Activated T-helper 1 cell treated with anti-CD3 and anti-CD28 coated beads, Interleukin-12 subunit alpha, Interleukin-12 subunit beta, Interleukin-2, Interleukin-4 antibody, amounts not matched to agents 30 ng/mL and 10 ng/mL and 1 ng/mL, durations not matched to agents 14 hours and 24 hours and 36 hours (primary cell): ENCODE measurements at regions of chr15 and their contacts with region 1.

Region 1: GRCh38 chr15:59917504-59918157 is 86.5 kb upstream of the FOXB1 start:
- DNase-seq: peak; percentile 67
- H3K4me3 Mint-ChIP-seq: no peak overlapping the region
- H3K27ac Mint-ChIP-seq: peak overlapping the region; percentile 1
- H3K4me1 Mint-ChIP-seq: peaks cover 27% of the 10 kb centered on the region
- H3K27me3 Mint-ChIP-seq: peaks cover 32% of the 10 kb centered on the region

Region 2: GRCh38 chr15:59688841-59689625 is 228.6 kb before region 1 on chr15 and contains the start of gene BNIP2:
- intact Hi-C with region 1: loop called (anchors 1 kb)
- DNase-seq: peak; percentile 99
- H3K4me3 Mint-ChIP-seq: peak within 1 kb of the TSS; percentile 90
- H3K27ac Mint-ChIP-seq: peak within 1 kb of the TSS; percentile 91
- H3K4me1 Mint-ChIP-seq: peaks cover 41% of the 10 kb centered on the region
- H3K27me3 Mint-ChIP-seq: no peaks in the 10 kb centered on the region
- total RNA-seq, gene BNIP2: 63.5 and 64.6 TPM in 2 replicates

Region 3: GRCh38 chr15:59797756-59798604 is 119.7 kb before region 1 on chr15:
- intact Hi-C with region 1: loop called (anchors 1 kb)
- DNase-seq: no peak
- H3K4me3 Mint-ChIP-seq: peak overlapping the region; percentile 10
- H3K27ac Mint-ChIP-seq: peak overlapping the region; percentile 49
- H3K4me1 Mint-ChIP-seq: peaks cover 52% of the 10 kb centered on the region
- H3K27me3 Mint-ChIP-seq: peaks cover 10% of the 10 kb centered on the region

Region 4: GRCh38 chr15:60006203-60006862 is 88.7 kb after region 1 on chr15:
- intact Hi-C with region 1: loop called (anchors 1 kb)
- DNase-seq: peak; percentile 82
- H3K4me3 Mint-ChIP-seq: peak overlapping the region; percentile 92
- H3K27ac Mint-ChIP-seq: peak overlapping the region; percentile 93
- H3K4me1 Mint-ChIP-seq: peaks cover 63% of the 10 kb centered on the region
- H3K27me3 Mint-ChIP-seq: peaks cover 73% of the 10 kb centered on the region

Region 5: GRCh38 chr15:60026555-60026954 is 108.9 kb after region 1 on chr15:
- intact Hi-C with region 1: no loop called
- DNase-seq: no peak
- H3K4me3 Mint-ChIP-seq: no peak overlapping the region
- H3K27ac Mint-ChIP-seq: no peak overlapping the region
- H3K4me1 Mint-ChIP-seq: no peaks in the 10 kb centered on the region
- H3K27me3 Mint-ChIP-seq: peaks cover 5% of the 10 kb centered on the region

Region 6: GRCh38 chr15:60128000-60128376 is 210.4 kb after region 1 on chr15:
- intact Hi-C with region 1: loop called (anchors 5 kb)
- DNase-seq: no peak
- H3K4me3 Mint-ChIP-seq: peak overlapping the region; percentile 82
- H3K27ac Mint-ChIP-seq: peak overlapping the region; percentile 80
- H3K4me1 Mint-ChIP-seq: peaks cover 57% of the 10 kb centered on the region
- H3K27me3 Mint-ChIP-seq: peaks cover 11% of the 10 kb centered on the region

Region 7: GRCh38 chr15:60326824-60327654 is 409.4 kb after region 1 on chr15:
- intact Hi-C with region 1: loop called (anchors 1 kb)
- DNase-seq: peak; percentile 13
- H3K4me3 Mint-ChIP-seq: no peak overlapping the region
- H3K27ac Mint-ChIP-seq: no peak overlapping the region
- H3K4me1 Mint-ChIP-seq: peaks cover 7% of the 10 kb centered on the region
- H3K27me3 Mint-ChIP-seq: peaks cover 56% of the 10 kb centered on the region